ENCODE measurements at regions of chr11 and their contacts with region 1.

Region 1: GRCh38 chr11:127268932-127269331 is 268.4 kb upstream of the KIRREL3 start:
- DNase-seq: no peak
- ATAC-seq: no peak
- H3K4me3 Mint-ChIP-seq: no peak overlapping the region
- H3K27ac Mint-ChIP-seq: no peak overlapping the region
- H3K4me1 Mint-ChIP-seq: no peaks in the 10 kb centered on the region
- H3K27me3 Mint-ChIP-seq: peaks cover 3% of the 10 kb centered on the region

Region 2: GRCh38 chr11:126011265-126011664 is 1257.7 kb before region 1 on chr11:
- CTCF ChIA-PET with region 1: no interaction called
- POLR2A ChIA-PET with region 1: no interaction called
- intact Hi-C with region 1: loop called in 1 of 2 experiments (anchors 5 kb)
- DNase-seq: no peak
- ATAC-seq: no peak
- H3K4me3 Mint-ChIP-seq: no peak overlapping the region
- H3K27ac Mint-ChIP-seq: no peak overlapping the region
- H3K4me1 Mint-ChIP-seq: no peaks in the 10 kb centered on the region
- H3K27me3 Mint-ChIP-seq: no peaks in the 10 kb centered on the region